Tibial artery (tissue), 4 donors: ENCODE measurements at regions of chr15 and their contacts with region 1.

Region 1: DNA sequence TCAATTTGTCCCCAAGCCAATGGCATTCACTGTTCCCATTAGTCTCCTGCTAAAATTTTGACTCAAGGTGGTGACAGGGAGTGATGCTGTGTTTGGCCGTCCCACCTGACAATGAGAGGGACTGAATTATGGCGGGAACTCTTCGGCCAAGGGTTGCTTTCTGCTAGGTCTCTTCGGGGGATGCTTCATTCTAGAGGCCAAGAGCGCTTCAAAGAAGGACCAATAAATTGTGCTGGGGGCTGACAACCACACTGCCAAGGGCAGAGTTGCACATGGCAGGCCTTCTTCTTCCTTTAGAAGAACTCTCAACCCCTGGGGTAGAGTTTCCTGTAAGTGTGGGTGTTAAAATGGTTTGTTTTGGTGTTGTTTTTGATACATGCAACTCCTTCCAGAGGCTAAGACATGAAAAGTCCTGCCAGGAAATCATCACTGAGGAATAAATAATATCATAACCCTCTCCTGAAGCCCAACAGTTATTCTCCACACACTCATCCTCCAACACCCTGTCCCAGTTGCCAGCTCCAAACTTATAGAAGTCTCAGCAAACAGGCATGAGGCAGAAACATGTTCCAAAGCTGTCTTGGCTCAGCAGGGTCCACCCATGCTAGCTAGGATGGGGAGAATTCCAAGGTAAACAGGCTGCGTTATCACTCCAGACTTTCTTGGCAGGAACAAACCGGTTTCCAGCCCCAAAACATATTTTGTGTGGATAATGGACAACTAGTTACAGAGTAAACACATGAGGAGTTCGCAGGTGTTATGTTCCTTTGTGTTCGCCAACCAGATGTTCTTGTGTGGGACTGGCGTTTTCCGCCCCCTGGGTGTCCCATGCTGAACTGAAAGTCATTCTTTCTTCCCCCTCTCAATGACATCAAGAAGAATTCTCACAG is 396.7 kb upstream of the RGMA start:
- DNase-seq: peak; percentile 50 to 76
- H3K4me3 ChIP-seq: peak overlapping the region in 1 of 2 donors; percentile 22
- H3K27ac ChIP-seq: peak overlapping the region; percentile 48 to 63
- H3K4me1 ChIP-seq: peaks cover 0 to 17% (median 8%) of the 10 kb centered on the region in 4 donors
- H3K27me3 ChIP-seq: no peaks in the 10 kb centered on the region
- CTCF ChIP-seq: peak; percentile 32 to 37

Region 2: DNA sequence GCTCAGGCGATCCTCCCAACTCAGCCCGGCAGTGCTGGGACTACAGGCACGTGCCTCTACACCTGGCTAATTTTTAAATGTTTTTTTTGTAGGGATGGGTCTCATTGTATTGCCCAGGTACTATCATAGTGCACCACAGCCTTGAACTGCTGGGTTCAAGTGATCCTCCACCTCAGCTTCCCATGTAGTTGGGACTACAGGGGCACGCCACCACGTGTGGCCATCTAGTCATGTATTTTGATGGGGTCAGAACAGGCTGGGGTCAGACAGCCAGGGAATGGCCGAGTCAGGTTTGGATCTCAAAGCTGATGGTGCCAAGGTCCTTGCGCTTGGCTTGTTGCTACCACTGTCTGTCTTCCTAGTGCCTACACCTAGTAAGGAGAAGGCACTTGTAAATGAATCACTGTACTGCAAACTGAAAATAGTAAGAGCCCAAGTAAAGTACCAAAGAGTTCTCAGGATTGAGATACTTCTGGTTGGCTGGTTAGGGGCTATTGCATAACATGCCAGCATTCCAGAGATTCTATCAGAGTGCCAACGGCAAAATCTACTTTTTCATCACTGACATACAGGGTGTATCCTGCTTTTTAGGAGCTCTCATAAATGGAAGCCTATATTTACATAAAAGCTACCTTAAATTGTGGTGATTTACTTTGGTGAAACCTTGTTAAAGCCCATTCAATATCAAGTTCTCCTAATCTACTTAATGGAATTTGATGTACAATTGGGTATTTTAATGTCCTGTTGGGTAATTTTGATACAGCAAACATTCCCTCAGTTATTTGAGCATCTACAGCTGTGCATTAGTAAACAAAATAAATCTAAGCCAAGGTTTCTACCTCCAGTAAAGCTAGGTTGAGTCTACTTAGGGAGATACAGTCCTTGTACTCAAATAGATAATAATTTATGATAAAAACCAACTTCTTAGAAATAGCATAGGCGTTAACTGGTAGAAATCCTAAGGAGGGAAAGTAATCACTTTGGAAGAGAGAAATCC is 616.4 kb before region 1 on chr15:
- intact Hi-C with region 1: loop called (anchors 10 kb)
- DNase-seq: no peak
- H3K4me3 ChIP-seq: no peak overlapping the region
- H3K27ac ChIP-seq: peak overlapping the region; percentile 70 to 72
- H3K4me1 ChIP-seq: peaks cover 0 to 21% (median 17%) of the 10 kb centered on the region in 4 donors
- H3K27me3 ChIP-seq: no peaks in the 10 kb centered on the region
- CTCF ChIP-seq: no peak

Region 3: GRCh38 chr15:93515256-93516051 is 29.8 kb after region 1 on chr15:
- intact Hi-C with region 1: no loop called
- DNase-seq: no peak
- H3K4me3 ChIP-seq: no peak overlapping the region
- H3K27ac ChIP-seq: peak overlapping the region in 1 of 2 donors; percentile 13
- H3K4me1 ChIP-seq: peaks cover 0 to 6% (median 1%) of the 10 kb centered on the region in 4 donors
- H3K27me3 ChIP-seq: no peaks in the 10 kb centered on the region
- CTCF ChIP-seq: no peak